Adrenal gland (tissue), 19 donors: ENCODE measurements at regions of chr10 and their contacts with region 1.

Region 1: GRCh38 chr10:37857287-37858211 is at the start of gene ZNF248:
- DNase-seq: peak; percentile 97 to 99 (median 98)
- H3K4me3 ChIP-seq: peak within 1 kb of the TSS; percentile 61 to 93 (median 72)
- H3K27ac ChIP-seq: peak within 1 kb of the TSS; percentile 98 to 100 (median 100)
- H3K4me1 ChIP-seq: peaks cover 7 to 32% of the 10 kb centered on the region in 2 donors
- H3K27me3 ChIP-seq: no peaks in the 10 kb centered on the region
- CTCF ChIP-seq: peak in 1 of 6 experiments; percentile 16
- POLR2A ChIP-seq: peak; percentile 97 to 98
- total RNA-seq, gene ZNF248: 5.6 to 21.6 (median 10.9) TPM

Region 2: GRCh38 chr10:38094158-38094920 is 236.8 kb after region 1 on chr10 and contains the start of gene ZNF37A:
- intact Hi-C with region 1: loop called in 1 of 2 experiments (anchors 10 kb)
- DNase-seq: peak; percentile 90 to 98 (median 97)
- H3K4me3 ChIP-seq: peak within 1 kb of the TSS; percentile 13 to 92 (median 65)
- H3K27ac ChIP-seq: peak within 1 kb of the TSS in 4 of 5 donors; percentile 45 to 95 (median 91)
- H3K4me1 ChIP-seq: peaks cover 7% of the 10 kb centered on the region in 2 donors
- H3K27me3 ChIP-seq: no peaks in the 10 kb centered on the region
- CTCF ChIP-seq: peak in 1 of 6 experiments; percentile 3
- POLR2A ChIP-seq: peak in 1 of 2 donors; percentile 83
- total RNA-seq, gene ZNF37A: 6.5 to 20.2 (median 14.0) TPM